T-cell (primary cell): ENCODE measurements at regions of chr7 and their contacts with region 1.

Region 1: DNA sequence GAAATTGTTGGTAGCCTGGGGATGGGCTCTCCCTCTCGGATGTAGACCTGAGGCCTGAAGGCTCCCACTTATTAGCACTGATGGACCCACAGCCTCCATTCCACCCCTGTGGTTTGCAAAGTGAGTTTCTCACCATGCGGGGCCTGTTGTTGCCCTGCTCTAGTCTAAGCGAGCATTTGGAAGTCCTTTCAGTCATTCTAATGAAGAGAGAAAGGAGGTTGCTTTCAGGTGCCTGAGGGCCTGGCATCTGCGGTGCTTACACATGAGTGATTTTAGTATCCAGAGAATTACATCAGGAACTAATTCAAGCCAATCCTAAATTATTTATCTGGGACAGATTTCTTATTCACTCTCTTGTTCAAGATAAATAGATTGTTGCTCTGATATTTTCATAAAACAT is 61.6 kb downstream of the NAMPT start:
- DNase-seq: no peak
- ATAC-seq: no peak
- H3K4me3 ChIP-seq: no peak overlapping the region
- H3K4me3 Mint-ChIP-seq: no peak overlapping the region
- H3K27ac ChIP-seq: no peak overlapping the region
- H3K27ac Mint-ChIP-seq: no peak overlapping the region
- H3K4me1 ChIP-seq: no peaks in the 10 kb centered on the region
- H3K4me1 Mint-ChIP-seq: peaks cover 0 to 2% (median 0%) of the 10 kb centered on the region in 3 donors
- H3K27me3 ChIP-seq: peaks cover 0 to 6% of the 10 kb centered on the region in 2 experiments
- H3K27me3 Mint-ChIP-seq: peaks cover 5 to 9% of the 10 kb centered on the region in 2 donors

Region 2: GRCh38 chr7:106190589-106191330 is 32.4 kb before region 1 on chr7:
- CTCF ChIA-PET with region 1: interaction called in 1 of 2 experiments, 14 read pairs
- POLR2A ChIA-PET with region 1: no interaction called
- DNase-seq: no peak
- ATAC-seq: no peak
- H3K4me3 ChIP-seq: no peak overlapping the region
- H3K4me3 Mint-ChIP-seq: no peak overlapping the region
- H3K27ac ChIP-seq: no peak overlapping the region
- H3K27ac Mint-ChIP-seq: no peak overlapping the region
- H3K4me1 ChIP-seq: no peaks in the 10 kb centered on the region
- H3K4me1 Mint-ChIP-seq: no peaks in the 10 kb centered on the region
- H3K27me3 ChIP-seq: peaks cover 0 to 12% of the 10 kb centered on the region in 2 experiments
- H3K27me3 Mint-ChIP-seq: peaks cover 30 to 40% of the 10 kb centered on the region in 2 donors

Region 3: GRCh38 chr7:106239404-106239803 is 16.2 kb after region 1 on chr7:
- CTCF ChIA-PET with region 1: no interaction called
- POLR2A ChIA-PET with region 1: no interaction called
- DNase-seq: no peak
- ATAC-seq: peak in 1 of 4 experiments; percentile 25
- H3K4me3 ChIP-seq: no peak overlapping the region
- H3K4me3 Mint-ChIP-seq: no peak overlapping the region
- H3K27ac ChIP-seq: no peak overlapping the region
- H3K27ac Mint-ChIP-seq: no peak overlapping the region
- H3K4me1 ChIP-seq: no peaks in the 10 kb centered on the region
- H3K4me1 Mint-ChIP-seq: no peaks in the 10 kb centered on the region
- H3K27me3 ChIP-seq: no peaks in the 10 kb centered on the region
- H3K27me3 Mint-ChIP-seq: peaks cover 0 to 3% of the 10 kb centered on the region in 2 donors

Region 4: DNA sequence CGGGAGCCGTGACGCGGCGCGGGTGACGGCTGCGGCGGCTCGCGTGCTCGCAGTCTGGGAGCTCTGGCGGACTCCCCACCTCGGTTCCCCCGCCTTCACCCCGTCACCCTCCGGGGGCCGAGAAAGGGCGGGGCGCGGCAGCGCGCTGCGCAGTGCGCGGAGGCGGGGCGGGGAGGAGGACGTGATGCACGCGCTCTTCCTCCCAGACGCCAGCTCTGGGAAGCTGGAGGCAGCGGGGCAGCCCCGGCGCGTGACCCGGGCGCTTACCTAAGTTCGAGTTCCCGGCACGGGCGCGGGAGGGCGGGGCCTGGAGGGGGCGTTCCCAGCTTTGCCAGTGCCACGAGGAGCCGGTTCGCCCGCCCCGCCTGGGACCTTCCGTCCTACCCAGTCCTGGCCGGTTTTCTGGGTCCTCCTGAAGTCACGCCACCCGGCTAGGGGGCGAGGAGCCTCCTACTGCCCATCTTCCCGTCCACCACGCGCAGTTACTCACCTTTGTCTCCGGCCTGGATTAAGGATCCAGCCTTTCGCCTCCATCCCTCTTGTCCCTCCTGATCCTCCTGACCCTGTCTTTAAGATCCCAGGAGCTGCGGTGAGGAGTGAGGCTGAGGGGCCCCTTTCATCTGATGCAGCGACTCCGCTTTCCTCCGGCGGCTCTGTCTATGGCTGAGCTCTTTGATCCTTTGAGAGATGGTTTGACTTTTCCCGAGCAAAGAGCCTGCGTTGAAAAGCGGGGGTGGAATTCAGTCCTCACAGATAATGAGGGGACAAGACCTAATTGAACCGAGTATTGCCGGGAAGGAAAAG is 62.1 kb after region 1 on chr7:
- CTCF ChIA-PET with region 1: no interaction called
- POLR2A ChIA-PET with region 1: no interaction called
- DNase-seq: peak; percentile 86 to 100 (median 97)
- ATAC-seq: peak; percentile 88 to 96 (median 92)
- H3K4me3 ChIP-seq: peak overlapping the region; percentile 81 to 97
- H3K4me3 Mint-ChIP-seq: peak overlapping the region; percentile 85 to 97 (median 95)
- H3K27ac ChIP-seq: peak overlapping the region; percentile 91
- H3K27ac Mint-ChIP-seq: peak overlapping the region; percentile 94 to 97
- H3K4me1 ChIP-seq: peaks cover 7 to 12% of the 10 kb centered on the region in 2 experiments
- H3K4me1 Mint-ChIP-seq: peaks cover 30 to 38% (median 35%) of the 10 kb centered on the region in 3 donors
- H3K27me3 ChIP-seq: no peaks in the 10 kb centered on the region
- H3K27me3 Mint-ChIP-seq: peaks cover 0 to 1% of the 10 kb centered on the region in 2 donors

Region 5: DNA sequence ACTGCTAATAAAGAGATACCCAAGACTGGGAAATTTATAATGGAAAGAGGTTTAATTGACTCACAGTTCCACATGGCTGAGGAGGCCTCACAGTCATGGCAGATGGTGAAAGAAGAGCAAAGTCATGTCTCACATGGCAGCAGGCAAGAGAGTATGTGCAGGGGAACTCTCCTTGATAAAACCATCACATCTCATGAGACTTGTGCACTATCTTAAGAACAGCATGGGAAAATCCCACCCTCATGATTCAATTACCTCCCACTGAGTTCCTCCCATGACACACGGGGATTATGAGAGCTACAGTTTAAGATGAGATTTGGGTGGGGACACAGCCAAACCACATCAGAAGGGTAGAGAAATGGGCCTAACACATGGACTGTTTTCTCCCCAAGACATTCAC is 281.5 kb after region 1 on chr7:
- CTCF ChIA-PET with region 1: no interaction called
- POLR2A ChIA-PET with region 1: interaction called in 1 of 2 experiments, 11 read pairs
- DNase-seq: no peak
- ATAC-seq: no peak
- H3K4me3 ChIP-seq: no peak overlapping the region
- H3K4me3 Mint-ChIP-seq: no peak overlapping the region
- H3K27ac ChIP-seq: no peak overlapping the region
- H3K27ac Mint-ChIP-seq: no peak overlapping the region
- H3K4me1 ChIP-seq: no peaks in the 10 kb centered on the region
- H3K4me1 Mint-ChIP-seq: no peaks in the 10 kb centered on the region
- H3K27me3 ChIP-seq: no peaks in the 10 kb centered on the region
- H3K27me3 Mint-ChIP-seq: peaks cover 0 to 3% of the 10 kb centered on the region in 2 donors

Region 6: GRCh38 chr7:107312418-107312817 is 1089.3 kb after region 1 on chr7:
- CTCF ChIA-PET with region 1: no interaction called
- POLR2A ChIA-PET with region 1: no interaction called
- DNase-seq: no peak
- ATAC-seq: no peak
- H3K4me3 ChIP-seq: no peak overlapping the region
- H3K4me3 Mint-ChIP-seq: no peak overlapping the region
- H3K27ac ChIP-seq: no peak overlapping the region
- H3K27ac Mint-ChIP-seq: no peak overlapping the region
- H3K4me1 ChIP-seq: no peaks in the 10 kb centered on the region
- H3K4me1 Mint-ChIP-seq: no peaks in the 10 kb centered on the region
- H3K27me3 ChIP-seq: no peaks in the 10 kb centered on the region
- H3K27me3 Mint-ChIP-seq: no peaks in the 10 kb centered on the region

Region 7: DNA sequence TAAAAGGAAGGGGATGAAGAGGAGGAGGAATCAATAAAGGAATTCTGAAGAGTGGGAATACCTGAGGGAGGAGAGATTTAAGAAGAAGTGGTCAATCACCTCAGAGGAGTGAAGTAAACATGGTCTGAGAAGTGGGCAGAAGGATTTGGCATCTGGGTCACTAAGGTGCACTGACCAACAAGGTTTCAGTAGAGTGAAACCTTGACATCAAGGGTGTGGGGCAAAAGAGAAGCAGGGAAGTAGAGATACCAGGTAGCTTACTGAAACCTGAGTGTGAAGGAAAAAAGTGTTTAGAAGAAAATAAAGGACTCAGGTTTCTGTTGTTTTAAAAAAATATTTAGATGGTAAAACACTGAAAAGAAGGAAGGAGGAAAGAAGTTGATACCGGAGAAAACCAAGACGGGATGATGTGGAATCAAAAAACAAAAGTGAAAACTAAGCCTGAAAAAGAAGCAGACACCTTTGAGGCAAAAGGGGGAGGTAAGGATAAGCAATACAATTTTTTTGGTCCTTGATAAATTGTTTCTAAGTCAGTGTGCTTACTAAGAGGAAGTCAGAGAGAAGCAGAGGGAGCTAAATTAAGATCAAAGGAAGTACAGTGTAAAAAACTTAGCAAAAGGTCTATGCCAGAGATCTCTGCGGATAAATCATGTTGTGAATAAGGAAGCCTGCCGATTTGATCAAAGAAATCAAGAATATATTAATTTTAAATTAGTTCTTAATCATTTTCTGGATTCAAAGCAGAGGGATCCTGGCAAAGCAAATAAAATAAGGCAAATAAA is 1109.5 kb after region 1 on chr7:
- CTCF ChIA-PET with region 1: no interaction called
- POLR2A ChIA-PET with region 1: interaction called in 1 of 2 experiments, 14 read pairs
- DNase-seq: peak in 1 of 35 experiments; percentile 7
- ATAC-seq: peak in 3 of 4 experiments; percentile 49 to 57 (median 50)
- H3K4me3 ChIP-seq: no peak overlapping the region
- H3K4me3 Mint-ChIP-seq: peak overlapping the region in 2 of 3 donors; percentile 0 to 18
- H3K27ac ChIP-seq: no peak overlapping the region
- H3K27ac Mint-ChIP-seq: no peak overlapping the region
- H3K4me1 ChIP-seq: peaks cover 0 to 5% of the 10 kb centered on the region in 2 experiments
- H3K4me1 Mint-ChIP-seq: peaks cover 19 to 28% (median 27%) of the 10 kb centered on the region in 3 donors
- H3K27me3 ChIP-seq: no peaks in the 10 kb centered on the region
- H3K27me3 Mint-ChIP-seq: no peaks in the 10 kb centered on the region